RWPE1 (cell line): ENCODE measurements at regions of chr17 and their contacts with region 1.

Region 1: DNA sequence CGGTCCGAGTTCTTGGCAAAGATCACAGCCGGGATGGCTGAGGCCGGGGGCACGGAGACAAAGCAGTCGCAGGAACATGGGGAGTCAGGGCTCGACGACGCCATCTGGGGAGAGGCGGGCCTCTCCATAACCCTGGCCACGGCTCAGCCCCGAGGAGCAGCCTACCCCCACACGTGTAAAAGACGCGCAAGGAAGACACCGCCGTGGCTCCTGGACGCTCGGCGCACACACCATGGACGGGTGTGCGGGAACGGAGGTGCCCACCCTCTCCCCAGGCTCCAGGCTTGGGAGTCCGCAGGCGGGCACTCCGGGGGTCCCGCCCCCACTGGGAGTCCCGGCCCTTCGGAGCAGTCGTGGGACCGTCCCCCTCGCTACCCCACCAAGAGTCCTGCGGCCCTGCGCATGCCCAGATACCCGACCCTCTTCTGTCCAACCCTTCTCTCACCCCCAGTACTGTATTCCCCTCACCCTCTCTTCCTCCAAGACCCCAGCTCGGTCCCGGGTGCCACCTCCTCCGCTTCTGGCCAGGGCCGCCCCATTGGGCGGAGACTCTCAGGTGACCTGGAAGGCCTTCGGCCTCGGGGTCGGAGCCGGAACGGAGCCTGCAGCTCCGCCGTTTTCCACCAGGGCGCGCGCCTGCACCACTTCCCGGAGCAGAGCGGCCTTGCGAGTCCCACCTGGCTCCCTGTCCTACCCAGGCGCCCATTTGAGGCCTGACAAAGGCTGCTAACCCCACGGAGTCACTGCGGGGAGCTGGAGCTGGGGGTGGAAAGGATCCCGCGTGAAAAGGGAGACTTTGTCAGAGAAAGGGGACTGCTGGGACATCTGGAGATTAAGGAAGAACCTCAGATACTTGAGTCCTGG is at the start of gene SCRN2:
- DNase-seq: peak; percentile 79
- H3K27ac ChIP-seq: peak within 1 kb of the TSS; percentile 73
- CTCF ChIP-seq: peak; percentile 99

Region 2: DNA sequence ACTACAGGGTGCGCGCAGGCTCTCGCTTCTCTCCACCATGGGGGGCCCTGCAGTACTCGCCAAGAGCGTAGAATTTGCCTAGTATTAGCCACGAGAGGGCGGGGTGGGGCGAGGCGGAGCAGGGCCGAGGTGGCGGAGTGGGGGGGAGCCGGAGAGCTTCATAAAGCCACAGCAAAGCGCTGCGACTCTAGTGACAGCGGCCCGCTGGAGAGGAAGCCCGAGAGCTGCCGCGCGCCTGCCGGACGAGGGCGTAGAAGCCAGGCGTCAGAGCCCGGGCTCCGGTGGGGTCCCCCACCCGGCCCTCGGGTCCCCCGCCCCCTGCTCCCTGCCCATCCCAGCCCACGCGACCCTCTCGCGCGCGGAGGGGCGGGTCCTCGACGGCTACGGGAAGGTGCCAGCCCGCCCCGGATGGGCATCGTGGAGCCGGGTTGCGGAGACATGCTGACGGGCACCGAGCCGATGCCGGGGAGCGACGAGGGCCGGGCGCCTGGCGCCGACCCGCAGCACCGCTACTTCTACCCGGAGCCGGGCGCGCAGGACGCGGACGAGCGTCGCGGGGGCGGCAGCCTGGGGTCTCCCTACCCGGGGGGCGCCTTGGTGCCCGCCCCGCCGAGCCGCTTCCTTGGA is 107.8 kb before region 1 on chr17 and contains the start of gene TBX21:
- CTCF ChIA-PET with region 1: no interaction called
- POLR2A ChIA-PET with region 1: no interaction called
- DNase-seq: peak; percentile 24
- H3K27ac ChIP-seq: no peak within 1 kb of the TSS
- CTCF ChIP-seq: no peak

Region 3: GRCh38 chr17:47882247-47882646 is 41.3 kb after region 1 on chr17:
- CTCF ChIA-PET with region 1: interaction called, 78 read pairs
- POLR2A ChIA-PET with region 1: no interaction called
- DNase-seq: no peak
- H3K27ac ChIP-seq: peak overlapping the region; percentile 50
- CTCF ChIP-seq: no peak

Region 4: DNA sequence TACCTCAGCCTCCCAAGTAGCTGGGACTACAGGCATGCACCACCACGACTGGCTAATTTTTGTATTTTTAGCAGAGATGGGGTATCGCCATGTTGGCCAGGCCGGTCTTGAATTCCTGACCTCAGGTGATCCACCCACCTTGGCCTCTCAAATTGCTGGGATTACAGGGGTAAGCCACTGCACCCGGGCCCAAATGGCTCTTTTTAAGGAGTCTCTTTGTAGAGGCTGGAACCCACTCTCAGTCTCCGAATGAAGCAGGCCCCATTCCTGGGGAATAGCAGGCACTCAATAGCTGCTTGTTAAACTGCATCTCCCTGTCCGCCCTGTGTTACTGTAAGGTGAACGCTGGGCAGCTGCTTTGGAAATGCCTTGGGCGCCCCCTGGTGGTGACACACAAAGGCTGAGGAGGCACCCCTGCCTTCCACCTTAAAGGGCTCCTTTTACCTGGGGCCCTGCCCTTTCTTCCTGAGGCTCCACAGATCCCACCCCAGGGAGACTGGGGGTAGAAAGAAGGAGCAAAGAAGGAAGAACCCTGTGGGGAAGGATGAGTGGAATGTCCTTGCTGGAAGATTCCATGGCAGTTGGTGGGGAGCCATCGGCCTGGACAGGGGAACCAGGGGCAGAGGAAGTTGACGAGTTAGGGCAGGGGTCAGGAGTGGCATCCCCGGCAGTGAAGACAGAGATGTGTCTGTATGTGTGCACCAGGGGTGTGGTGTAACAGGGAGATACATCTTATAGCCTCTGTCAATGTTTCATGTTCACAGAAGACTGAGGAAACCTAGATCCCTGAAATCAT is 49.0 kb after region 1 on chr17:
- CTCF ChIA-PET with region 1: interaction called, 102 read pairs
- POLR2A ChIA-PET with region 1: interaction called, 9 read pairs
- DNase-seq: peak; percentile 64
- H3K27ac ChIP-seq: no peak overlapping the region
- CTCF ChIP-seq: peak; percentile 96

Region 5: GRCh38 chr17:47895856-47896671 is 55.1 kb after region 1 on chr17 and contains the start of gene SP2:
- CTCF ChIA-PET with region 1: interaction called, 102 read pairs
- POLR2A ChIA-PET with region 1: interaction called, 9 read pairs
- DNase-seq: peak; percentile 100
- H3K27ac ChIP-seq: peak within 1 kb of the TSS; percentile 93
- CTCF ChIP-seq: no peak

Region 6: DNA sequence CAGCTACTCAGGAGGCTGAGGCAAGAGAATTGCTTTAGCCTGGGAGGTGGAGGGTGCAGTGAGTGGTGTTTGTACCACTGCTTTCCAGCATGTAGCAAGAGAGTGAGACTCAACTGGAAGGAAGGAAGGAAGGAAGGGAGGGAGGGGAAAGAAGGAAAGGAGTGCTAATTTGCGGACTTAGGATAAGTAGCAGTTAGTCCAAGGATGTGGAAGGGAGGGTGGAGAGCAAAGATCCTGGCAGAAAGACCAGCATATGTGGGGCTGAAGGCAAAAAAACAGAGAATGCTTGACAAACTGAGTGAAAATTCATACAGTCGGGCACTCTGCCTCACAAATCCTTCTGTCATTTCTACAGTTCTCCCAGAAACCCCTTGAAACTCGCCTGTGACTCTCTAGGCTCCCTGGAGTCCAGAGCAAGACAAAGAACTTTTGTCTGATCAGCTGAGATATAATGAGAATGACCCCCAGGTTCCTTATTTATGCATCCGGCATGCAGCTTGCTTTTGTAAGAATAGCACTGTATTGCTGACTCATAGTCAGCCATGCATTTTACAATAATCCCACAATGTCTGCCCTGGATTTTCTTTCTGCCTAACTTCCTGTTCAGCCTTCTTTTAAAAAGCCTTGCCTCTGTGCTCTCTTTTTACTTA is 161.4 kb after region 1 on chr17:
- CTCF ChIA-PET with region 1: no interaction called
- POLR2A ChIA-PET with region 1: no interaction called
- DNase-seq: peak; percentile 40
- H3K27ac ChIP-seq: peak overlapping the region; percentile 54; the same call in 1 of the 2 replicates
- CTCF ChIP-seq: no peak